Activated CD8-positive, alpha-beta T cell treated with anti-CD3 and anti-CD28 coated beads, Interleukin-2, amount 10 ng/mL, durations not matched to agents 7 days and 5 days (primary cell): ENCODE measurements at regions of chr2 and their contacts with region 1.

Region 1: DNA sequence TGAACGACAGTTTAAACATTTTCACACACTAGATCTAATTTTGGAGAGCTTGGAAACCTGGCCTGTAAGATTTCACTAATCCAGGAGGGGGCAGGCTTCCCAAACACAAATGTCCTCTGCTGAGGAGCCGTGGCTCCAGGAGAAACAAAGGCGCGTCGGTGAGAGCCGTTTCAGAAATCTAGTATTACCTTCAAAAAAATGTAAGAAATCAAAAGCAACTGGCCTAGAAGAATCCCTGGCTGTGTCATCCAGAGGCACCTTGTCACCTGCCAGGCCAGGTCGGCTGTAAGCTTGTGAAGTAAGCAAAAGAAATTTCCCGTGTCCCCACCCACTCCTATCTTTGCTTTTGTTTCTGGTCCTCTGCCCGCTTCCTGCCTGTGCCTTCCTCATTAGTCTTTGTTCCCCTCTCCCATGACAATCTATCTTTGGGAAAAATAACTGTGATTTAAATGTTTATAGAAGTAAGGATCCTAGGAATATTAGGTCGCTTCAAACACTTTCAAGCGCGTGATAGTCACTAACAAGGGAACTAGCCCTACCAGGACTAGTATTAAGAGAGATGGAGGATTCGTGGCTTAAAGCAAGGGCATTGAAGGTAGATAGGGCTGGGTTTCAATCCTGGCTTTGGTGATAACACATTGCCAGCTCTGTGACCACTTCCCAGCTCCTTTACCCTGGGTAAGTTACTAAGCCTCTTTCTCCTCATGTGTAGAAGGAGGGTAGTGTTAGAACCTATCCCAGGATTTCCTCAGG is 99.5 kb upstream of the STK39 start:
- DNase-seq: peak; percentile 80
- ATAC-seq: peak; percentile 85
- H3K4me3 Mint-ChIP-seq: peak overlapping the region; percentile 76
- H3K27ac Mint-ChIP-seq: peak overlapping the region; percentile 5
- H3K4me1 Mint-ChIP-seq: peaks cover 5% of the 10 kb centered on the region
- H3K27me3 Mint-ChIP-seq: peaks cover 3% of the 10 kb centered on the region

Region 2: GRCh38 chr2:168316073-168316440 is 30.8 kb before region 1 on chr2:
- CTCF ChIA-PET with region 1: no interaction called
- POLR2A ChIA-PET with region 1: no interaction called
- DNase-seq: no peak
- ATAC-seq: no peak
- H3K4me3 Mint-ChIP-seq: no peak overlapping the region
- H3K27ac Mint-ChIP-seq: no peak overlapping the region
- H3K4me1 Mint-ChIP-seq: no peaks in the 10 kb centered on the region
- H3K27me3 Mint-ChIP-seq: peaks cover 2% of the 10 kb centered on the region

Region 3: DNA sequence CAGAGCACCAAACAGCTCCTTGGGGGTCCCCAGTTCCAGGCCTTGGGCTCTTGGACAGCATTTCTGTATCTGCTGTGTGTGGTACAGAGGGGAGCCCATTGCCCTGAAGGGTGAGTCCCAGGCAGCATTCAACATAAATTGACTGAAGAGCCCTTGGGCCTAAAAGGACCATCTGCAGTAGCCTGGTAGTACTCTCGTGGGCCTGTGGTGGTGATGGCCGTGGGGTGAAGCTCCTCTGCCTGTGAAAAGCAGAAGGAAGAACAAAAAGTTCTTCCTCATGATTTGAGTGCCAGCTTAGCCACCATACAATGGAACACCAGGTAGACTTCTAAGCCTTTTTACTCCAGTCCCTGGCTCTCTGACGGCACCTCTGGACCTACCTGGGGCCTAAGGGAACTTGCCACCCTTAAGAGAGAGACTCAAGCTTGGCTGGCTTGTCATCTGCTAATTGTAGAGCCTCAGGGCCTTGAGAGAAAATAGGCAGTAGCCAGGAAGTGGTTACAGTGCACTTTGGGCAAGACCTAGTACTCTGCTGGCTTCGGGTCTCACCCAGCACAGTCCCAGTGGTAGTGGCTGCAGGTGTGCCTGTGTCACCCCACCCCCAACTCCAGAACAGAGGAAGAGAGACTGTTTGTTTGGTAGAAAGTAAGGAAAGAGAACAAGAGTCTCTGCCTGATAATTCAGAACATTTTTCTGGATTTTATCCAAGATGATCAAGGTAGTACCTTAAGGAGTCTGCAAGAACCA is 24.5 kb after region 1 on chr2:
- CTCF ChIA-PET with region 1: interaction called, 15 read pairs
- POLR2A ChIA-PET with region 1: no interaction called
- DNase-seq: no peak
- ATAC-seq: peak; percentile 58
- H3K4me3 Mint-ChIP-seq: no peak overlapping the region
- H3K27ac Mint-ChIP-seq: no peak overlapping the region
- H3K4me1 Mint-ChIP-seq: peaks cover 14% of the 10 kb centered on the region
- H3K27me3 Mint-ChIP-seq: no peaks in the 10 kb centered on the region

Region 4: DNA sequence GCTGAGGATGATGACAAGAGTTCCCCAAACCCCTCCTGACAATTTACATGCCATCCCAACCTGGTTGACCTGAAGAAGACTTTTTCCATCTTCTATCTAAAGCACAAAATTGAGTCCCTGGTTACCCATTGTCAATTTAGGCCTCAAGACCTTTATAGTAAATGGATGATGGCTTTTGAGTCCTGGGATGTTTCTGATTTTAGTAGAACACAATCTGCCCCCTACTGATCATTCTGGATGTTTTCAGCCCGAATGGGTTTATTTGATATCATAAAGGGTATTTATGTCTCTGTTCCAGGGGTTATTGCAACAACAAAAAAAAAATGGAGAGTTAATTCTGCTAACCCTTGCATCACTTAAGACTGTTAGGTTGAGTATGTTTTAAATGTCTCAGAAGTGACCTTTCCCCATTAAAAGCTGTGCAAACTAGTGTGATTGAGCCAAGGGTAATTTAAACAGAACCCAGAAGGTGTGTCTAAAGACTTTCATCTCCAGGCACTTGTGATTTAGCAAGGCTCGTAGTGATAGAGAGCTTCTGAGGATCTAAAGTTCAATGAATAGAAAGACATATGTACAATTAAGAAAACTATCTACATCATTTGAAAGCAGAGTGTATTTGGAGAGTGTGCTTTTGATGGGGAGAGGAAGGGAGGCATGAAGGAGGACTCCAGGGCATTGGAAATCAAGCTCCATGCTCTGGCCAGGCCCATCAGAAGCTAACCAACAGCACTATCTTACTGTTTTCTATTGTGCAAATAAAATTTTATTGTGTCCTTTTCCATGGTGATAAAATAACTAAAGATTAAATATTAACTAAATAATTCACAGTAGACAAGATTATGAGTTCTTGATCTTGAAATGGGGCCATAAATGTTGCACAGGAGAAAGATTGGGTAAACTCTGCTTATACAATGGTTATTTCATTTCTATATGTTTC is 358.9 kb after region 1 on chr2:
- CTCF ChIA-PET with region 1: interaction called, 50 read pairs
- POLR2A ChIA-PET with region 1: no interaction called
- DNase-seq: no peak
- ATAC-seq: no peak
- H3K4me3 Mint-ChIP-seq: no peak overlapping the region
- H3K27ac Mint-ChIP-seq: no peak overlapping the region
- H3K4me1 Mint-ChIP-seq: peaks cover 4% of the 10 kb centered on the region
- H3K27me3 Mint-ChIP-seq: no peaks in the 10 kb centered on the region

Region 5: GRCh38 chr2:168758970-168759820 is 412.3 kb after region 1 on chr2:
- CTCF ChIA-PET with region 1: interaction called, 20 read pairs
- POLR2A ChIA-PET with region 1: no interaction called
- DNase-seq: peak; percentile 39
- ATAC-seq: peak; percentile 72
- H3K4me3 Mint-ChIP-seq: no peak overlapping the region
- H3K27ac Mint-ChIP-seq: no peak overlapping the region
- H3K4me1 Mint-ChIP-seq: peaks cover 24% of the 10 kb centered on the region
- H3K27me3 Mint-ChIP-seq: no peaks in the 10 kb centered on the region